ENCODE measurements at regions of chr1 and their contacts with region 1.

Region 1: GRCh38 chr1:63691701-63692425 is 82.0 kb upstream of the ROR1 start:
- DNase-seq: no peak
- ATAC-seq: peak; percentile 95

Region 2: GRCh38 chr1:63653976-63654375 is 37.9 kb before region 1 on chr1:
- intact Hi-C with region 1: no loop called
- DNase-seq: no peak
- ATAC-seq: no peak

Region 3: GRCh38 chr1:63773815-63774616 is 82.2 kb after region 1 on chr1 and contains the start of gene ROR1:
- intact Hi-C with region 1: loop called (anchors 5 kb)
- DNase-seq: peak; percentile 91
- ATAC-seq: peak; percentile 98
- total RNA-seq, gene ROR1: 8.6 TPM

Region 4: DNA sequence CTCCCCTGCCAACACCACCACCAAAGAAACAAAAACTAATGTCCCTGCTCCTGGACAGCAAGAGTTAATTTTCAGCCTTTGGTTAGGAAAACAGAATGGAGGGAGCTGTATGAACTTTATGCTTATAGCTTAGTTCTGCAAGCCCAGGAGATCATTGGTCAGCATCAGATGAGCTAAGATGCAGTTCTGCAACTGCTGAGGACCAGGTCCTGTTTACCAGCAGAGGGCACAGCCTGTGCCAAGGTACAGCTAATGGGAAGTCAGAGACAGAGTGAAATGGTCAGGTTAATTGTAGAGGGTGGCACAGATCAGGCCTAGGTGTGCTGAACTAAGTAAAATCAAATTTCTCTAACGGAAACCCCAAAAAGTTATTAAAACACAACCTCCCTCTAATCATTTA is 243.3 kb after region 1 on chr1:
- intact Hi-C with region 1: loop called (anchors 10 kb)
- DNase-seq: no peak
- ATAC-seq: peak; percentile 80

Region 5: DNA sequence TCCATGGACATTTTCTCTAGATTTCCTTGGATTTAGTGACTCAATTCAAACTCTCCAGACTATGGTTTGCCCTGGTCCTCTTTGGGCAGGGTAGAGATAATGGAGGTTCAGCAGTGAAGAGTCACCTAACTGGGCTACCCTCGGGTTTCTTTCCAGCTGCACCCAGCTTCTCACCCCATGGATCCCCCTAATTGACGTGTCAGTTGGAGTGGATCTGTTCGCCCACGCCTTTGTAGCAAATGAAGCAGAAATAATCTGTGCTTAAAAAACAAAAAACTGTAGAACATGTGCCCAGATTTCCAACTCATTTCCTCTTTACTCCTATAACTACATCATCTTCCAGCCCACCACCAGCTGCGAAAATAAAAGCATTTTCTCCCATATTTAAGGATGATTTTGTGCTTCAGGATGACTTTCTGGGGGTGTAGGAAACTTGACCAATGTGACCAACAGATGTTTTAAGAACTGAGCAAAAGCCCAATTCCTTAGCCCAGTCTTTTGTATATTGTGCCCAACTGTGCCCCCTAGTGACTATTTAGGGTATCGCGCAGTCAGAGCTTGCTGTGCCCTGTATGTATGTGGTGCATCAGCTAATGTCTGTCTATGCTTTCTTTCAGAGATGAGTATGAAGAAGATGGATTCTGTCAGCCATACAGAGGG is 445.0 kb after region 1 on chr1:
- intact Hi-C with region 1: loop called (anchors 10 kb)
- DNase-seq: peak; percentile 79
- ATAC-seq: peak; percentile 93

Region 6: DNA sequence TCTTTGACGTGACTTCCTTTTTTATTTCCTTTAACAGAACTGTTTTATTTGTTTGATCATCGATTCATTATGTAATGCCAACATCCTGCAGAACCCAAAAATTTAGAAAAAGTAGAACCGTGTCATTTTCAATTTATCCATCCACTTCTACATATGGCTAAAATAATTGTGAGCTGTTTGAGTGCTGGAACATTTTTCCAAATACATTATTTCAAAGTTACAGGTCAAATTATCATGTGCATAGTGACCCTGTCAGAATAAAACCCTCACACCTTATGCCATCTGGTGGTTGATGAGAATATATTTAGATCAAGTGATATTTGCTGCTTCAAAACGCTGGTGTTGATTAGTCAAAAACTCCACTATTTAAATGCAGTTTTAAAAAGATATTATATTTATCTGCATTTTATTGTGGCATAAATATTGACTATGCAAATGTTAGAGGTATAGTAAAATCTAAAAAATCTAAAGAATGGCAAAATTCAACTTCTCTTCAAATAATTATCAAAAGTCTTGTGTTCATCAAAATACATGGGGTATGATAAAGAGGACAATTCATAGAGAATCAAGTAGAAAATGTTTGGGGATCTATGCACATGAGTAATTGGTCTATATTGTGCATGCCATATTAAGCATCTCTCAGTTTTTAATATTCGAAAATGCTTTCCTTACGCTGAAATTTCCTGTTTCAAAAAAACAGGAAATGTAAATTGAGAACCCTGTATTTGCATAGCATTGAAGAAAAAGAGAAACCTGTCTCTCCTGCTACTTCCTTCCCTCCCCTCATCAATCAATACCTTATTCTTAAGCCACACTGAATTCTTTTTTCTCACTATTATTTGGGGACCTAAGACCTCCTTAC is 551.3 kb after region 1 on chr1:
- intact Hi-C with region 1: loop called (anchors 5 kb)
- DNase-seq: no peak
- ATAC-seq: peak; percentile 57

Measured in Right ventricle myocardium superior (tissue), 1 donor.